Activated naive CD4-positive, alpha-beta T cell treated with anti-CD3 and anti-CD28 coated beads for 36 hours (primary cell): ENCODE measurements at regions of chr19 and their contacts with region 1.

Region 1: GRCh38 chr19:4267101-4267900 is 11.8 kb upstream of the SHD start:
- DNase-seq: peak; percentile 79
- H3K4me3 Mint-ChIP-seq: no peak overlapping the region
- H3K27ac Mint-ChIP-seq: no peak overlapping the region
- H3K4me1 Mint-ChIP-seq: peaks cover 20% of the 10 kb centered on the region
- H3K27me3 Mint-ChIP-seq: no peaks in the 10 kb centered on the region

Region 2: GRCh38 chr19:4304530-4305252 is 37.4 kb after region 1 on chr19 and contains the start of gene FSD1:
- CTCF ChIA-PET with region 1: interaction called, 8 read pairs
- intact Hi-C with region 1: loop called (anchors 5 kb)
- DNase-seq: peak; percentile 79
- H3K4me3 Mint-ChIP-seq: peak within 1 kb of the TSS; percentile 71
- H3K27ac Mint-ChIP-seq: peak within 1 kb of the TSS; percentile 84
- H3K4me1 Mint-ChIP-seq: peaks cover 34% of the 10 kb centered on the region
- H3K27me3 Mint-ChIP-seq: no peaks in the 10 kb centered on the region
- total RNA-seq, gene FSD1: 12.3 to 17.5 TPM

Region 3: DNA sequence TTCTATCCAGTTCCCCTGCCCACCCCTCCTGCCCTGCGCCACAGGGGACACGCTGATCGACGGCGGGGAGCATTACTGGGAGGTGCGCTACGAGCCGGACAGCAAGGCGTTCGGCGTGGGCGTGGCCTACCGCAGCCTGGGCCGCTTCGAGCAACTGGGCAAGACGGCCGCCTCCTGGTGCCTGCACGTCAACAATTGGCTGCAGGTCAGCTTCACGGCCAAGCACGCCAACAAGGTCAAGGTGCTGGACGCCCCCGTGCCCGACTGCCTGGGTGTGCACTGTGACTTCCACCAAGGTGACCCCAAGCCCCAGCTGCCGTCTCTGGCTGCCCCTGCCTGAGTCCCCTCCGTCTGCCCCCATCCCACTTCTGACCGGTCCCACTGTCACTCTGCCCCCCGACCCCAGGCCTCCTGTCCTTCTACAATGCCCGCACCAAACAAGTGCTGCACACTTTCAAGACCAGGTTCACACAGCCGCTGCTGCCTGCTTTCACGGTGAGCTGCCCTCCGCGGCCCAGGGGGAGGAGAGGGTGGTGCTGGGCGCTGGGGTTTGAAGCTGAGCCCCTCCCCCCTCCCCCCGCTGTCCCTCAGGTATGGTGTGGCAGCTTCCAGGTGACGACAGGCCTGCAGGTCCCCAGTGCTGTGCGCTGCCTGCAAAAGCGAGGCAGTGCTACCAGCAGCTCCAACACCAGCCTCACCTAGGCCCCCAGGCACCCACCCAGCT is 55.8 kb after region 1 on chr19:
- CTCF ChIA-PET with region 1: interaction called, 29 read pairs
- intact Hi-C with region 1: no loop called
- DNase-seq: no peak
- H3K4me3 Mint-ChIP-seq: no peak overlapping the region
- H3K27ac Mint-ChIP-seq: no peak overlapping the region
- H3K4me1 Mint-ChIP-seq: peaks cover 17% of the 10 kb centered on the region
- H3K27me3 Mint-ChIP-seq: no peaks in the 10 kb centered on the region

Region 4: DNA sequence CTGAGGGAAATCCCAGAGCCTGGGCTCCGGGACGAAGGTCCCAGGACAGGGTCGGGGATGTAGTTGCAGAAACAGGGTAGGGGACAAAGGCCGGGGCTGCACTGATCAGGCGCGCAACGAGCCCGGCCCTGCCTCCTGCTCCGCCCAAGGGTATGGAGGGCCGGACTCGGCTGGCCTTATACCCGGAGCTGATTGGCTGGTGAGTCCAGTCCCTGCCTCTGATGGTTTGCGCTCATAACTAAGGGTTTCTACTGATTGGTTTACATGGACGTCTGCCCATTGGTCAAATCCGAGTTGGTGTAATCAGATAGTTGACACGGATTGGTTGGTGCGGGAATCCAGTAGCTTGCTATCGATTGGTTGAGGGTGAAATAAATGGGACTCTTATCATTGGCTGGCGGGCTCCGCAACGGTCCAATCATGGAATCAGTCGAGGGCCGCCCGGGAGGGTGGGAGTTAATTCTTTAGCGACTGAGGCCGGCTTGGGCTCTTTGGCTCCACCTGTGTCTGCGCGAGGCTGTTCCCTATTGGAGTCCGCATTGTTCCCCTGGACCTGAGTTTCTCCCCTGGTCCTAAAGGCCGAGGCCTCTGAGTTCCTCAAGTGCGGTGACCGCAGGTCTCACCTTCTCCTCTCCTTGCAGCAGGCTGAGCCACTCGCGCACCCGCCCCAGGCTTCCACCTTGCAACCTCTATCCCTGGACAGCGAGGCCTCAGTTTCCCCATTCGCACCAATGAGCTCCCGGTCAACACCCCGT is 75.5 kb after region 1 on chr19:
- CTCF ChIA-PET with region 1: interaction called, 11 read pairs
- intact Hi-C with region 1: loop called (anchors 1 kb)
- DNase-seq: peak; percentile 97
- H3K4me3 Mint-ChIP-seq: peak overlapping the region; percentile 94
- H3K27ac Mint-ChIP-seq: peak overlapping the region; percentile 94
- H3K4me1 Mint-ChIP-seq: peaks cover 27% of the 10 kb centered on the region
- H3K27me3 Mint-ChIP-seq: no peaks in the 10 kb centered on the region

Region 5: DNA sequence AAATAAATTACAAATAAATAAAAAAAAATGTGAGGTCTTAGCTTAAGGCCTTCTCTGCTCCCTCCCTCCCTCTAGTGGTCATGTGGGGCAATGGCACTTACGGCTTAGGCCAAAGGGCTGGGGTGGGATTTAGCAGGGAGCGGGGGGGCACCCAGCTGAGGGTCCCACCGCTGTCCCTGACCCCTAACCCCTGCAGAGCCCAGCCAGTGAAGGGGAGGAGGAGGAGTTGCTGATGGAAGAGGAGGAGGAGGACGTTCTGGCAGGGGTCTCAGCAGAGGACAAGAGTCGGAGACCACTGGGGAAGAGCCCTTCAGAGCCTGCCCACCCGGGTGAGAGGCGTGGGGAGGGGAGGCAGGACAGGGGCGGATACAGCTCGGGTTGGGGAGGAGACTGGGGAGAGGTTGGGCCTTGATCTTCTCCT is 85.4 kb after region 1 on chr19:
- CTCF ChIA-PET with region 1: interaction called, 53 read pairs
- intact Hi-C with region 1: loop called (anchors 1 kb)
- DNase-seq: peak; percentile 62
- H3K4me3 Mint-ChIP-seq: no peak overlapping the region
- H3K27ac Mint-ChIP-seq: no peak overlapping the region
- H3K4me1 Mint-ChIP-seq: peaks cover 2% of the 10 kb centered on the region
- H3K27me3 Mint-ChIP-seq: no peaks in the 10 kb centered on the region

Region 6: GRCh38 chr19:4524808-4525562 is 257.7 kb after region 1 on chr19:
- CTCF ChIA-PET with region 1: no interaction called
- intact Hi-C with region 1: loop called (anchors 1 kb)
- DNase-seq: peak; percentile 84
- H3K4me3 Mint-ChIP-seq: no peak overlapping the region
- H3K27ac Mint-ChIP-seq: no peak overlapping the region
- H3K4me1 Mint-ChIP-seq: no peaks in the 10 kb centered on the region
- H3K27me3 Mint-ChIP-seq: no peaks in the 10 kb centered on the region

Region 7: DNA sequence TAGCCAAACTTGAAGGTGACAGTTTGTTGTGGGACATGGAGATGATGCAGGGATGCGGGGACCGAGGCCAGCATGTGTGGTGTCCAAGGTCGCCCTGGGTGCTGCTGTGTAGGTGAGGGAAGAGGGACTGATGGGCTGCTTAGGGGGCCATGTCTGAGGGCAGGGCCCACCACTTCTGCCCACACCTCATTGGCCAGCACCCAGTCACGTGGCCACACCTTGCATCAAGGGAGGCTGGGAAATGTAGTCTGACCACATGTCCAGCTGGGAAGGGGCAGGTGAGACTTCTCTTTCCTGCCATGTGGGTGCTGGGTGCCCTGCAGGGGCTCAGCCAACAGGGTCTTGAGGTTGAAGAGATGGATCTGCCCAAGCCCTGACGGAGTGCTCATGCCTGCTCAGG is 790.6 kb after region 1 on chr19:
- CTCF ChIA-PET with region 1: no interaction called
- intact Hi-C with region 1: no loop called
- DNase-seq: no peak
- H3K4me3 Mint-ChIP-seq: no peak overlapping the region
- H3K27ac Mint-ChIP-seq: no peak overlapping the region
- H3K4me1 Mint-ChIP-seq: no peaks in the 10 kb centered on the region
- H3K27me3 Mint-ChIP-seq: no peaks in the 10 kb centered on the region

Region 8: GRCh38 chr19:5397804-5398692 is 1130.7 kb after region 1 on chr19:
- CTCF ChIA-PET with region 1: no interaction called
- intact Hi-C with region 1: no loop called
- DNase-seq: no peak
- H3K4me3 Mint-ChIP-seq: no peak overlapping the region
- H3K27ac Mint-ChIP-seq: no peak overlapping the region
- H3K4me1 Mint-ChIP-seq: no peaks in the 10 kb centered on the region
- H3K27me3 Mint-ChIP-seq: peaks cover 44% of the 10 kb centered on the region